ENCODE measurements at regions of chr15 and their contacts with region 1.

Region 1: DNA sequence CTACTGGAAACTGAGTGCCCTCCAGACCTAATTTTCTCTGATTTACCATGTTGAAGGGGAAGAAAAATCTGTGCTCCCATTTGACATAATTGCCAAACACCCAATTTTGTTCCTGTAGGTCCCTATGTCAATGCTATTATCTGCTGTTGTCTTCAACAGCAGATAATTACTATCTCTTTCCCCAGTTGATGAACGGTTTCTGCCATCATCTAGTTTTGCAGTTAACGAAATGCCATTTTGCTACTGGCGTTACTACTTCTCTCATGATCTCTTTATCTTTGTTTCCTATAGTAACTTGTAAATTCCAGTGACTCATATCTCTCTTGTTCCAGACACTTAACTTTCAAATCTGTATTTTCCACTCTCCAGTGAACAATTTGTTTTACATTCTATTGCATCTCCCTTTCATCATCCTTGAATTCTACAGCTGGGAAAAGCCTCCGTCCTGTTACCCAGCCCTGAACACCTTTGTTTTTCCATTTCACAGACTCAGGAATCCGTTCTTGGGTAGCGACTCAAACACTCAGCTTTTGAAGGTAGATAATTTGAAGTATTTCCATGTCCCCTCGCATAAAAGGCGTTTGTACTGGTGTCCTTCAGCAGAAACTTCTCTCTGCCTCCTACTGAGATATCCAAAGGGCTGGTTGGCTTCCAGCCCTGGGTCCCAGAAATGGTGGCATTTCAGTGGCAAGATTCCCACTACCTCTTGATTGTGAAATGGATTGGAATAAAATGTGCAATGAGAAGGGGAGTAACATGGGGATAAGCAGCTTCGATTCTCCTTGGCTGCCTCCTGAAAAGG is 111.7 kb downstream of the FOXB1 start:
- DNase-seq: no peak
- H3K4me3 ChIP-seq: no peak overlapping the region
- H3K4me3 Mint-ChIP-seq: no peak overlapping the region
- H3K27ac ChIP-seq: no peak overlapping the region
- H3K27ac Mint-ChIP-seq: no peak overlapping the region
- H3K4me1 ChIP-seq: no peaks in the 10 kb centered on the region
- H3K4me1 Mint-ChIP-seq: peaks cover 0 to 8% (median 3%) of the 10 kb centered on the region in 4 donors
- H3K27me3 ChIP-seq: no peaks in the 10 kb centered on the region
- H3K27me3 Mint-ChIP-seq: peaks cover 3 to 7% of the 10 kb centered on the region in 2 donors

Region 2: GRCh38 chr15:60128000-60128376 is 12.2 kb after region 1 on chr15:
- CTCF ChIA-PET with region 1: interaction called, 13 read pairs
- POLR2A ChIA-PET with region 1: interaction called, 3 read pairs
- intact Hi-C with region 1: no loop called
- DNase-seq: no peak
- H3K4me3 ChIP-seq: peak overlapping the region; percentile 56 to 81
- H3K4me3 Mint-ChIP-seq: peak overlapping the region; percentile 74 to 94 (median 92)
- H3K27ac ChIP-seq: peak overlapping the region; percentile 58
- H3K27ac Mint-ChIP-seq: peak overlapping the region; percentile 92 to 97 (median 96)
- H3K4me1 ChIP-seq: peaks cover 28% of the 10 kb centered on the region
- H3K4me1 Mint-ChIP-seq: peaks cover 19 to 45% (median 33%) of the 10 kb centered on the region in 4 donors
- H3K27me3 ChIP-seq: no peaks in the 10 kb centered on the region
- H3K27me3 Mint-ChIP-seq: no peaks in the 10 kb centered on the region

Region 3: DNA sequence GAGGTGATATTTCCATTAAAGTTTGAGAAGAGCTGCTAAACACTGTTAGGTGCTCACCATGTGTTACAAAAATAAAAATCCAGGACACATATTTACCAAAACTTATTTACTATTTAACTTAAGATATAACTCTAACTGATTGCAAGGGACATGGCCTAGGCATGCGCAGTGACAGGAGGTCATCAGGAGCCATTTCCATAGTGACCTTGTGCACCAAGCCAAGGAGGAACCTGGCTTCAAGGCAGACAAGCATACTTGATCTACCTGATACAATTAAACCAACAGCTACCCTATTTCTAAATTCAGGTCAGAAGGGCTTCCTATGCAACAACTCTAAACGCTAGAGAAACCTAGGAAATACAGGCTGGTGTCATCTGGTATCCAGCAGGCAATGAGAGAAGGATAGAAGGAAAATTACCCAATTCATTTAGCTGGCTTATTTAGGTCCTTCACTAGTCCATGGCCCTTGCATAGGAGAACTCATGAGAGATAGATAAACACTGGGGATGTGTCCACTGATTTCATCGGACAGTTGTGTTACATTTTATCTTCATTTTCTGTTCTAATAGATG is 22.7 kb after region 1 on chr15:
- CTCF ChIA-PET with region 1: no interaction called
- POLR2A ChIA-PET with region 1: no interaction called
- intact Hi-C with region 1: no loop called
- DNase-seq: no peak
- H3K4me3 ChIP-seq: no peak overlapping the region
- H3K4me3 Mint-ChIP-seq: no peak overlapping the region
- H3K27ac ChIP-seq: no peak overlapping the region
- H3K27ac Mint-ChIP-seq: no peak overlapping the region
- H3K4me1 ChIP-seq: no peaks in the 10 kb centered on the region
- H3K4me1 Mint-ChIP-seq: no peaks in the 10 kb centered on the region
- H3K27me3 ChIP-seq: no peaks in the 10 kb centered on the region
- H3K27me3 Mint-ChIP-seq: peaks cover 9 to 17% of the 10 kb centered on the region in 2 donors

Measured in CD4-positive, alpha-beta memory T cell (primary cell).